AG04450 (cell line): ENCODE measurements at regions of chr19 and their contacts with region 1.

Region 1: DNA sequence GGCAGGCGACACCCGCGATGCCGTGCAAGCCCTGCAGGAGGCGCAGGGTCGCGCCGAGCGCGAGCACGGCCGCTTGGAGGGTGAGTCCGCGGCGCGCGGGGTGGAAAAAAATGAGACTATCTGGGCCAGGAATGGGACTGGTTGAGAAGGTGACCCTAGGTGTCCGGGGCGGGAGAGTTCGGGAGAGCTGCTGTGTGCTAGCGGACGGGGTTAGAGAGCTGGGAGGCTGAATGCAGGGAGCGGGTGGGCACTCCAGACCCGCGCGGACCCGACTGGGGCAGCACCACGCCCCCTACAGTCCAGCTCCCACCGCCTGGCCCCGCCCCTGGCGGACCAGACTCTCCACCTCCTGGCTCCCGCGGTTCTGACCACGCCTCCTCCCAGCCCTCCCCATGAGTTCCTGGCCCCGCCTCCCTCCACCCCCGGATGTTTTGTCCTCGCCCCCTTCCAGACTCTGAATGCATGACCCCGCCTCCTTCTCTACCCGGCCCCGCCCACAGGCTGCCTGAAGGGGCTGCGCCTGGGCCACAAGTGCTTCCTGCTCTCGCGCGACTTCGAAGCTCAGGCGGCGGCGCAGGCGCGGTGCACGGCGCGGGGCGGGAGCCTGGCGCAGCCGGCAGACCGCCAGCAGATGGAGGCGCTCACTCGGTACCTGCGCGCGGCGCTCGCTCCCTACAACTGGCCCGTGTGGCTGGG is 1.5 kb downstream of the CLEC11A start:
- DNase-seq: peak; percentile 99
- H3K4me3 ChIP-seq: peak overlapping the region; percentile 83
- H3K27ac ChIP-seq: peak overlapping the region; percentile 52
- H3K27me3 ChIP-seq: no peaks in the 10 kb centered on the region
- CTCF ChIP-seq: peak; percentile 78

Region 2: GRCh38 chr19:50376166-50377050 is 348.3 kb before region 1 on chr19 and contains the start of gene NR1H2:
- CTCF ChIA-PET with region 1: interaction called, 10 read pairs
- POLR2A ChIA-PET with region 1: no interaction called
- DNase-seq: peak; percentile 96
- H3K4me3 ChIP-seq: peak within 1 kb of the TSS; percentile 89
- H3K27ac ChIP-seq: peak within 1 kb of the TSS; percentile 100
- H3K27me3 ChIP-seq: no peaks in the 10 kb centered on the region
- CTCF ChIP-seq: no peak
- polyA plus RNA-seq, gene NR1H2: 23.7 and 32.5 TPM in 2 replicates

Region 3: DNA sequence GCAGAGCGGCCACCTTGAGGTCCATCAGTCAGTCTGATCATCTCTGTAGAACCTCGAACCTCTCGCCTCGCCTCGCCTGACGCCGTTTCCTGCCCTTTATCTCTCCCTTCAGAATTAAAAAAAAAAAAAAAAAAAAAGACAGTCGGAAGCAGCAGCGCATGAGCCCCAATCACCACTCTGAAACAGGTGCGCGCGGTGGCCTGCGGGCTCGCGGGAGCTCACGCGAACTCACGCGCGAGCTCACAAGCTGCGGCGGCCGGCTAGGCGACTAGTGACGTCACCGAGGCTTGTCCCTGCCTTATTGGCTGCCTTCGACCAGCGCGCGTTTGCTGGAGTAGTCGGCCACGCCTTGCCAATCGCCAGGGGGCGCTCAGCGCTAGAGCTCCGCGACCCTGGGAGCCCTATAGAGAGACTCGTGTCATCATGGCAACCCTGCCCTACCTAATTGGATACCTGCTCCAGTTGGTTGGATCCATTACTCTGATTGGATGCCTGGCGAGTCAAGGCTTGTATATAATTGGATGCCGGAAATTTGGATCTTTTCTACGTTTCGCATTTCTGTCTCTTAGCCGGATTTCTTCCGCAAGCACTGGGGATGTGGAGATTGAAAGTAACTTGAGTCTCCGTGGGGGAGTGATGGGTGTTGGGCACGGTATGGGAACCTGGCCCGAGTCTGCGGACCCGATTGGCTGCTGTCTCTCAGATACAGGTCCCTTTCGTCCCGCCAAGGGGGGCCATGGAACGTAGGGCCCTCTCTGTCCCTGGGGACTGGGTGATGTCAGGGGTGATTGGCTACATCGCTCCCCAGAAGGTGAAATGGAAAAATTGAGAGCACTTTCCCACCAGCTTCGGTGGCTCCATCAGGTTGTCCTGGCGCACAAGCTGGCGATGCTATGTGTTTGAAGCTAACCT is 116.5 kb before region 1 on chr19:
- CTCF ChIA-PET with region 1: no interaction called
- POLR2A ChIA-PET with region 1: no interaction called
- DNase-seq: peak; percentile 8
- H3K4me3 ChIP-seq: no peak overlapping the region
- H3K27ac ChIP-seq: no peak overlapping the region
- H3K27me3 ChIP-seq: no peaks in the 10 kb centered on the region
- CTCF ChIP-seq: peak; percentile 51

Region 4: GRCh38 chr19:50705422-50706019 is 19.1 kb before region 1 on chr19:
- CTCF ChIA-PET with region 1: interaction called, 14 read pairs
- POLR2A ChIA-PET with region 1: no interaction called
- DNase-seq: peak; percentile 30
- H3K4me3 ChIP-seq: no peak overlapping the region
- H3K27ac ChIP-seq: no peak overlapping the region
- H3K27me3 ChIP-seq: no peaks in the 10 kb centered on the region
- CTCF ChIP-seq: peak; percentile 94

Region 5: GRCh38 chr19:50777754-50778303 is 53.2 kb after region 1 on chr19:
- CTCF ChIA-PET with region 1: interaction called, 18 read pairs
- POLR2A ChIA-PET with region 1: no interaction called
- DNase-seq: no peak
- H3K4me3 ChIP-seq: no peak overlapping the region
- H3K27ac ChIP-seq: no peak overlapping the region
- H3K27me3 ChIP-seq: peaks cover 33% of the 10 kb centered on the region
- CTCF ChIP-seq: no peak

Region 6: DNA sequence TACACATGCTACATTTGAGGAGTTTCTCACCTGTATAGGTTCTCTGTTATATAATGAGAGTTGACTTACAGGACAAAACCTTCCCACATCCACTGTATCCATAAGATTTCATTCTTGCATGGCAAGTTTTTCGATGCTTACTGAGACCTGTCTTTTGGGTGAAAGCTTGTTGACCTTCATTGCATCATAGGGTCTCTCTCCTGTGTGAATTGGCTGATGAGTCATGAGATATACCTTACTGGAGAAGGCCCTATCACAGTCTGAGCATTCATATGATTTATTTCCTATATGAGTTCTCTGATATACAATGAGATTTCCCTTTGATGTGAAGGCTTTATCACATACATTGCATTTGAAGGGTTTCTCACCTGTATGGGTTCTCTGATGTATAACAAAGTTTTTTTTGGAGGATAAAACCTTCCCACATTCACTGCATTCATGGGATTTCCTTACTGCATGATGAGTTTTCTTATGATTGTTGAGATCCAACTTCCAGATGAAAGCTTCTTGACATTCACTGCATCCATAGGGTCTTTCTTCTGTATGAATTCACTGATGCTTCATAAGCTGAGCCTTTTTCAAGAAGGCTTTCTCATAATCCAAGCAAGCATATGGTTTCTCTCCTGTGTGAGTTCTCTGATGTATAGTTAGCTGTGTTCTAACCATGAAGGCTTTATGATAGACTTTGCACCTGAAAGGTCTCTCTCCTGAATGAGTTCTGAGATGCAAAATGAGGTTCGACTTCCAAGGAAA is 1137.4 kb after region 1 on chr19:
- CTCF ChIA-PET with region 1: interaction called, 10 read pairs
- POLR2A ChIA-PET with region 1: no interaction called
- DNase-seq: no peak
- H3K4me3 ChIP-seq: no peak overlapping the region
- H3K27ac ChIP-seq: no peak overlapping the region
- H3K27me3 ChIP-seq: no peaks in the 10 kb centered on the region
- CTCF ChIP-seq: no peak